HCT116 (cell line): ENCODE measurements at regions of chr14 and their contacts with region 1.

Region 1: GRCh38 chr14:49828640-49829039 is 23.9 kb downstream of the NEMF start:
- DNase-seq: no peak
- ATAC-seq: no peak
- H3K4me3 ChIP-seq: no peak overlapping the region
- H3K27ac ChIP-seq: no peak overlapping the region
- H3K4me1 ChIP-seq: no peaks in the 10 kb centered on the region
- H3K27me3 ChIP-seq: no peaks in the 10 kb centered on the region
- CTCF ChIP-seq: no peak
- POLR2A ChIP-seq: no peak
- RAD21 ChIP-seq: no peak

Region 2: DNA sequence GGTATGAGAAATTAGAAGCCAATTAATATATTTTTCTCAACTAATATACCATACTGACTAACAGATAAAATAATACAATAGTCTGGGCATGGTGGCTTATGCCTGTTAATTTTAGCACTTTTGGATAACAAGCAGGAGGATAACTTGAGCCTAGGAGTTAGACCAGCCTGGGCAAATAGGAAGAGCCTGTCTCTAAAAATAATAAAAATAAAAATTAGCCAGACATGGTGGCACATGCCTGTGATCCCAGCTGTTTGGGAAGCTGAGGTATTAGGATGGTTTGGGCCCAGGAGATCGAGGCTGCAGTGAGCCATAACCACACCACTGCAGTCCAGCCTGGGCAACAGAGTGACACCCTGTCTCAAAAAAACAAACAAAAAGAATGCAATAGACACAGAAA is 36.0 kb before region 1 on chr14:
- CTCF ChIA-PET with region 1: no interaction called
- POLR2A ChIA-PET with region 1: no interaction called
- RAD21 ChIA-PET with region 1: no interaction called
- intact Hi-C with region 1: loop called (anchors 5 kb)
- DNase-seq: no peak
- ATAC-seq: no peak
- H3K4me3 ChIP-seq: no peak overlapping the region
- H3K27ac ChIP-seq: no peak overlapping the region
- H3K4me1 ChIP-seq: no peaks in the 10 kb centered on the region
- H3K27me3 ChIP-seq: no peaks in the 10 kb centered on the region
- CTCF ChIP-seq: no peak
- POLR2A ChIP-seq: no peak
- RAD21 ChIP-seq: no peak